ENCODE measurements at regions of chr2 and their contacts with region 1.

Region 1: GRCh38 chr2:213251618-213252017 is 32.6 kb upstream of the SPAG16 start:
- DNase-seq: peak; percentile 81
- ATAC-seq: peak; percentile 92
- H3K4me3 ChIP-seq: no peak overlapping the region
- H3K27ac ChIP-seq: peak overlapping the region; percentile 18; the same call in 1 of the 2 replicates
- H3K4me1 ChIP-seq: no peaks in the 10 kb centered on the region
- H3K27me3 ChIP-seq: no peaks in the 10 kb centered on the region
- CTCF ChIP-seq: peak; percentile 74
- POLR2A ChIP-seq: no peak
- RAD21 ChIP-seq: peak; percentile 85

Region 2: DNA sequence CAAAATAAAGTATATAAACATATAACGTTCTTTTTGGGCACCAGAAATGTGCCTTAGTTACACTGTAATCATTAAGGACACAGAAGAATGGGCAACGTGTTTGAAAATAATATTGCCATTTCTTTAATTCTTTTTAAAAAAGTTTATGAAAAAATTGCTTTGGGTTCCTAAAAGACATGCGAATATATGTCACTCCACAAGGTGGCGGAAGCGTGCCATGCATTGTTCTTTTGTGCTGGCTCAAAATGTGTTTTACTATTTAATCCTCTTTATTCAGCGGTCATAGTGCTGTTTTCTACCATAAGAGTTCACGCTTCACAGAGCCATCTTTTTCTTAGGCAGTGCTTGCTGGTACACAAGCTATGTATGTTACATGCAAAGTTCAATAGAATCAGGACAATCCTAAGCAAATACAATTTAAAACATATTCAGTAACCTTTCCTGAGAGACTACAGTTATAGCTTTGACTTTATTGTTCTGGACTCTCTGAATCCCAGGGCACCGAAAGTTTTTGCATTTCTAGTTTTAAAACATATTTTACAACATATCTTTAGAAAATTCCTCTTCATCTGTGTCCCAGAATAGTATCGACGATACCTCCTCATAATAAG is 565.2 kb before region 1 on chr2:
- CTCF ChIA-PET with region 1: no interaction called
- POLR2A ChIA-PET with region 1: no interaction called
- dilution Hi-C with region 1: no loop called
- in situ Hi-C with region 1: loop called (anchors 10 kb)
- intact Hi-C with region 1: loop called (anchors 1 kb)
- DNase-seq: peak; percentile 73
- ATAC-seq: peak; percentile 82
- H3K4me3 ChIP-seq: no peak overlapping the region
- H3K27ac ChIP-seq: no peak overlapping the region
- H3K4me1 ChIP-seq: peaks cover 3% of the 10 kb centered on the region
- H3K27me3 ChIP-seq: no peaks in the 10 kb centered on the region
- CTCF ChIP-seq: peak; percentile 97
- POLR2A ChIP-seq: 0 out of 2 replicates have a peak, but pooled peaks have one; percentile 34
- RAD21 ChIP-seq: peak; percentile 94

Region 3: DNA sequence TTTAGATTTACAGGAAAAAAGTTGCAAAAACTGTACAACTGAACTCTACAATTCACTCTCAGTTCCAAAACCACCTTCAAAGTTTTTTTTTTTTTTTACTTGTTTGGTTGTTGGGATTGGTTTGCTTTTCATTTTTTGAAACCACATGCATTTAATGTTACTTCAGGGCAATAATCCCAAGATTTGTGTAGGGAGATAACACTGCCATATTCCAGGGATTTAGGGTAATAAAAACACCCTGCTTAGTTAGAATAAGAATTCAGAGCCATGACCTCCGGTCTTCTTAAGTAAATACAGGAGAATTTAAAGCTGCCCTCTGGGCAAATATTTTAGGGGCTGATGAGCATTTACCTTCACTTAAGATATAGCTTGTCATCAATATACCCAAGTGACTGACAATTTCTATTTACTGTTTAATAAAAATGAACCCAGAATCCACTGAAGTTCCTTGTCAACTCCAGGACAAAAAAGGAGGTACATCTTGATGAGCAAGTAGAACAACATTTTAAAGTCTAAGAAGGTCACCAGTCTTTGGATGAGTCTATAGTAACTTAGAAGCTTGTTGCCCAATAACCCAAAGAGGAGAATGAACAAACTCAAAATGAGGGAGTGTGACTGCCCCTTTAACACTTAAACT is 76.0 kb before region 1 on chr2:
- CTCF ChIA-PET with region 1: no interaction called
- POLR2A ChIA-PET with region 1: no interaction called
- dilution Hi-C with region 1: no loop called
- in situ Hi-C with region 1: no loop called
- intact Hi-C with region 1: no loop called
- DNase-seq: no peak
- ATAC-seq: no peak
- H3K4me3 ChIP-seq: no peak overlapping the region
- H3K27ac ChIP-seq: no peak overlapping the region
- H3K4me1 ChIP-seq: 0 out of 2 replicates have a peak, but pooled peaks cover 2% of the 10 kb centered on the region
- H3K27me3 ChIP-seq: no peaks in the 10 kb centered on the region
- CTCF ChIP-seq: no peak
- POLR2A ChIP-seq: no peak
- RAD21 ChIP-seq: no peak

Region 4: DNA sequence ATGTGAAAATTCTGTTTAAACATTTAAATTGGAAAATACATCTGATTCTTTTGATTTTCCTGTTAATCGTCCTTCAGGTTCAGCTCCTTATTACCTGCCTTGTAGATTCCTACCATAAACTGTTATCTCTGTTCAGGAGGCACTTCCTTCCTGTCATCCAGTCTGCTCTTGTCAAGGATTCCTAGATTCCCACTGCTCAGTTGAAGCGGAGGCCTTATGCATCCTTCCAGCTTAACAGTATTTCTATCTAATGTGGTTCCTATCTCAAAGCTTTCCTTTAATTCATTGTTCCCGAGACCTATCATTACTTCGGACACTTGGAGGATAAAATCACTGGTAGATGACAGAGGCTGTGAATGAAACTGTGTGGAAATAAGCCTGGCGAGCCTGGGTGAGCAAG is 44.7 kb after region 1 on chr2:
- CTCF ChIA-PET with region 1: no interaction called
- POLR2A ChIA-PET with region 1: no interaction called
- dilution Hi-C with region 1: no loop called
- in situ Hi-C with region 1: no loop called
- intact Hi-C with region 1: no loop called
- DNase-seq: no peak
- ATAC-seq: no peak
- H3K4me3 ChIP-seq: no peak overlapping the region
- H3K27ac ChIP-seq: no peak overlapping the region
- H3K4me1 ChIP-seq: no peaks in the 10 kb centered on the region
- H3K27me3 ChIP-seq: no peaks in the 10 kb centered on the region
- CTCF ChIP-seq: no peak
- POLR2A ChIP-seq: no peak
- RAD21 ChIP-seq: no peak

Region 5: GRCh38 chr2:214410918-214411554 is 1159.4 kb after region 1 on chr2 and contains the start of gene VWC2L:
- CTCF ChIA-PET with region 1: no interaction called
- POLR2A ChIA-PET with region 1: no interaction called
- dilution Hi-C with region 1: no loop called
- in situ Hi-C with region 1: no loop called
- intact Hi-C with region 1: loop called (anchors 2 kb)
- DNase-seq: peak; percentile 76
- ATAC-seq: peak; percentile 99
- H3K4me3 ChIP-seq: no peak within 1 kb of the TSS
- H3K27ac ChIP-seq: no peak within 1 kb of the TSS
- H3K4me1 ChIP-seq: no peaks in the 10 kb centered on the region
- H3K27me3 ChIP-seq: no peaks in the 10 kb centered on the region
- CTCF ChIP-seq: no peak
- POLR2A ChIP-seq: no peak
- RAD21 ChIP-seq: peak; percentile 27; the same call in 1 of the 2 replicates
- total RNA-seq, gene VWC2L: not detected in 2 replicates

Measured in IMR-90 (cell line).